ENCODE measurements at regions of chr14 and their contacts with region 1.

Region 1: GRCh38 chr14:73295198-73295796 is 58.0 kb downstream of the PAPLN start:
- DNase-seq: no peak
- ATAC-seq: no peak
- H3K4me3 Mint-ChIP-seq: no peak overlapping the region
- H3K27ac Mint-ChIP-seq: no peak overlapping the region
- H3K4me1 Mint-ChIP-seq: peaks cover 11% of the 10 kb centered on the region
- H3K27me3 Mint-ChIP-seq: no peaks in the 10 kb centered on the region
- CTCF ChIP-seq: peak; percentile 49

Region 2: GRCh38 chr14:72771561-72771960 is 523.7 kb before region 1 on chr14:
- CTCF ChIA-PET with region 1: no interaction called
- POLR2A ChIA-PET with region 1: no interaction called
- DNase-seq: no peak
- ATAC-seq: no peak
- H3K4me3 Mint-ChIP-seq: no peak overlapping the region
- H3K27ac Mint-ChIP-seq: no peak overlapping the region; the same call in 1 of the 2 replicates
- H3K4me1 Mint-ChIP-seq: peaks cover 8% of the 10 kb centered on the region
- H3K27me3 Mint-ChIP-seq: no peaks in the 10 kb centered on the region; the same call in 1 of the 2 replicates
- CTCF ChIP-seq: no peak

Region 3: DNA sequence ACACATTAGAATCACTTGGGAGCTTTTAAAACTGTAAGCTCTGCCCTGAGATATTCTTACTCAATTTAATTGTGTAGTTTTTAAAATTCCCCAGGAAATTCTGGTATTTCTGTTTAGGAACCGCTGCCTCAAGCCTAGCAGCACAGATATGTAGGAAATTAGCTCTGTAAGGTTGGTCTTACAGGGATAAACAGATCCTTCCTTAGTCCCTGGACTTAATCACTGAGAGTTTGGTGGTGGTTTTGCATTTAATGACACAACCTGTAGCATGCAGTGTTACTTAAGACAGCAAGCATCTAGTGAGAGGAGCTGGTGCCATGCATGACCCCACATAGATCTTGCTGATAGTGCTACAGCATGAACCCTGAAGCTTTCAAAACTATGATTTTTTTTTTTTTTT is 77.9 kb before region 1 on chr14:
- CTCF ChIA-PET with region 1: no interaction called
- POLR2A ChIA-PET with region 1: no interaction called
- DNase-seq: no peak
- ATAC-seq: no peak
- H3K4me3 Mint-ChIP-seq: no peak overlapping the region
- H3K27ac Mint-ChIP-seq: no peak overlapping the region
- H3K4me1 Mint-ChIP-seq: peaks cover 9% of the 10 kb centered on the region
- H3K27me3 Mint-ChIP-seq: no peaks in the 10 kb centered on the region
- CTCF ChIP-seq: no peak

Region 4: GRCh38 chr14:73231981-73232851 is 63.1 kb before region 1 on chr14:
- CTCF ChIA-PET with region 1: interaction called, 15 read pairs
- POLR2A ChIA-PET with region 1: no interaction called
- DNase-seq: peak; percentile 82
- ATAC-seq: peak; percentile 69
- H3K4me3 Mint-ChIP-seq: no peak overlapping the region
- H3K27ac Mint-ChIP-seq: no peak overlapping the region
- H3K4me1 Mint-ChIP-seq: peaks cover 61% of the 10 kb centered on the region
- H3K27me3 Mint-ChIP-seq: peaks cover 26% of the 10 kb centered on the region
- CTCF ChIP-seq: peak; percentile 38

Region 5: DNA sequence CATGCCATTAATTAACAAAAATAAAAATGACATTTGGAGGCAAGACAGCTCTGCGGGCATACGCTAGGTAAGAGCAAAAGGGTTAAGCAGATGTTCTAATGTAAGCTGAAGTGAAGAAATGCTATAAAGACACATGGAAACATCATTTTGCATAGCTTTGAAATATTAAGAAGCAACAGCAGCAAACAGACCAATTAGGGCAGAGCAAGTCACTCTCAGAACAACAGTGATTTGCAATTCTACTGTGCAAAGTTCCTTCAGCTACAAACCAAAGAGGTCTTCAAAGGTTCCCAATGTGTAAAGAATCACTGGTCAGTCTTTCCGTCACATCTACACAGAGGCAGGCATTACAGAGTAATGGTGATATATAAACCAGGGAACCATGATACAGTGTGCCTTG is 10.2 kb after region 1 on chr14:
- CTCF ChIA-PET with region 1: interaction called, 31 read pairs
- POLR2A ChIA-PET with region 1: no interaction called
- DNase-seq: no peak
- ATAC-seq: no peak
- H3K4me3 Mint-ChIP-seq: no peak overlapping the region
- H3K27ac Mint-ChIP-seq: no peak overlapping the region
- H3K4me1 Mint-ChIP-seq: no peaks in the 10 kb centered on the region
- H3K27me3 Mint-ChIP-seq: no peaks in the 10 kb centered on the region
- CTCF ChIP-seq: no peak

Region 6: GRCh38 chr14:73325630-73326299 is 30.5 kb after region 1 on chr14:
- CTCF ChIA-PET with region 1: interaction called, 22 read pairs
- POLR2A ChIA-PET with region 1: no interaction called
- DNase-seq: no peak
- ATAC-seq: peak; percentile 67
- H3K4me3 Mint-ChIP-seq: no peak overlapping the region
- H3K27ac Mint-ChIP-seq: peak overlapping the region; percentile 80
- H3K4me1 Mint-ChIP-seq: peaks cover 31% of the 10 kb centered on the region
- H3K27me3 Mint-ChIP-seq: no peaks in the 10 kb centered on the region
- CTCF ChIP-seq: no peak

Region 7: GRCh38 chr14:73458151-73458976 is 163.1 kb after region 1 on chr14 and contains the start of gene NUMB:
- CTCF ChIA-PET with region 1: interaction called, 26 read pairs
- POLR2A ChIA-PET with region 1: no interaction called
- DNase-seq: peak; percentile 98
- ATAC-seq: peak; percentile 95
- H3K4me3 Mint-ChIP-seq: peak within 1 kb of the TSS; percentile 89
- H3K27ac Mint-ChIP-seq: peak within 1 kb of the TSS; percentile 97
- H3K4me1 Mint-ChIP-seq: peaks cover 41% of the 10 kb centered on the region
- H3K27me3 Mint-ChIP-seq: no peaks in the 10 kb centered on the region; the same call in 1 of the 2 replicates
- CTCF ChIP-seq: no peak
- total RNA-seq, gene NUMB: 42.0 to 54.0 TPM (median 53.8 TPM) in 3 replicates

Region 8: DNA sequence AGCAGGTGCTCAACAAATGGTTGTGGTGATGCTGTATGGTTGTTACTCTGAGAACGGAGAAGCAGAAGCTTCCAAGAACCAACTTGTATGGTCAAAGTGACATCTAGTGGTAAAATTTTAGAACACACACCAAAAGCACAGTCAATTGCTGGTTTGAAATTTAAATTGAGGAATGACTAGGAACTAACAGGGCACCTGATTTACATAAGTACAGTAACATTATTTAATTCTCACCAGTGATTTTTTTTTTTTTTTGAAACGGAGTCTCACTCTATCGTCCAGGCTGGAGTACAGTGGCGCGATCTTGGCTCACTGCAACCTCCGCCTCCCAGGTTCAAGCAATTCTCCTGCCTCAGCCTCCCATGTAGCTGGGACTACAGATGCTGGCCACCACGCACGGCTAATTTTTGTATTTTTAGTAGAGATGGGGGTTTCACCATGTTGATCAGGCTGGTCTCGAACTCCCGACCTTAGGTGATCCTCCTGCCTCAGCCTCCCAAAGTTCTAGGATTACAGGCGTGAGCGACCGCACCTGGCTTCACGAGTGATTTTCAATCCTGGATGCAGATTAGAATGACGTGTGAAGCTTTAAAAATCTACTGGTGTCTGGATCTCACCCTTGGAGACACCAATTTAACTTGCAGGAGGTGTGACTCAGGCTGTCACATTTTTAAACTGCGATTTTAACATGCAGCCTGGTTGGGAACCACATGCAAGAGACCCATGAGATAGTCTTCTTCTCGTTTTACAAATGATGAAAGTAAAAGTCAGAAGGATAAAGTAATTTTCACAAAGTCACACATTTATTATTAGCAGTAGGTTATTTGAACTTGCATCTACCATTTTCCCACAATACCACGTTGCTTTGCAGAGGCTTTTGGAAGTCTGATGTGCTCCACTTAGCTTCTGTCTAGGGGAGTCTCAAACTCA is 177.2 kb after region 1 on chr14:
- CTCF ChIA-PET with region 1: interaction called, 50 read pairs
- POLR2A ChIA-PET with region 1: no interaction called
- DNase-seq: no peak
- ATAC-seq: peak; percentile 82
- H3K4me3 Mint-ChIP-seq: no peak overlapping the region
- H3K27ac Mint-ChIP-seq: no peak overlapping the region
- H3K4me1 Mint-ChIP-seq: peaks cover under 1% of the 10 kb centered on the region; the same call in 1 of the 2 replicates
- H3K27me3 Mint-ChIP-seq: no peaks in the 10 kb centered on the region
- CTCF ChIP-seq: peak; percentile 43; the same call in 1 of the 2 replicates

Region 9: GRCh38 chr14:73633116-73634010 is 338.1 kb after region 1 on chr14:
- CTCF ChIA-PET with region 1: interaction called, 10 read pairs
- POLR2A ChIA-PET with region 1: no interaction called
- DNase-seq: peak; percentile 67
- ATAC-seq: peak; percentile 61
- H3K4me3 Mint-ChIP-seq: peak overlapping the region; percentile 77
- H3K27ac Mint-ChIP-seq: peak overlapping the region; percentile 96
- H3K4me1 Mint-ChIP-seq: peaks cover 12% of the 10 kb centered on the region
- H3K27me3 Mint-ChIP-seq: peaks cover 2% of the 10 kb centered on the region; the same call in 1 of the 2 replicates
- CTCF ChIP-seq: peak; percentile 65

Measured in WTC11 (cell line).